H1 (cell line): ENCODE measurements at regions of chr1 and their contacts with region 1.

Region 1: GRCh38 chr1:167687919-167688519 is 33.8 kb upstream of the MPZL1 start:
- DNase-seq: peak; percentile 63 to 95
- H3K4me3 ChIP-seq: no peak overlapping the region
- H3K27ac ChIP-seq: no peak overlapping the region
- H3K4me1 ChIP-seq: peaks cover 2 to 12% (median 6%) of the 10 kb centered on the region in 4 experiments
- H3K27me3 ChIP-seq: no peaks in the 10 kb centered on the region; a peak in 1 of 7 replicates
- CTCF ChIP-seq: peak; percentile 31 to 88 (median 82)
- EP300 ChIP-seq: no peak
- POLR2A ChIP-seq: no peak
- RAD21 ChIP-seq: peak; percentile 90 to 95

Region 2: GRCh38 chr1:167542109-167543032 is 145.6 kb before region 1 on chr1:
- CTCF ChIA-PET with region 1: interaction called, 20 read pairs
- POLR2A ChIA-PET with region 1: no interaction called
- DNase-seq: no peak
- H3K4me3 ChIP-seq: no peak overlapping the region
- H3K27ac ChIP-seq: no peak overlapping the region
- H3K4me1 ChIP-seq: peaks cover 0 to 4% (median 3%) of the 10 kb centered on the region in 4 experiments; a peak in 2 of 7 replicates
- H3K27me3 ChIP-seq: no peaks in the 10 kb centered on the region; a peak in 1 of 7 replicates
- CTCF ChIP-seq: no peak
- EP300 ChIP-seq: no peak
- POLR2A ChIP-seq: no peak
- RAD21 ChIP-seq: no peak

Region 3: GRCh38 chr1:167563579-167564246 is 124.3 kb before region 1 on chr1:
- CTCF ChIA-PET with region 1: interaction called, 26 read pairs
- POLR2A ChIA-PET with region 1: no interaction called
- DNase-seq: no peak
- H3K4me3 ChIP-seq: no peak overlapping the region
- H3K27ac ChIP-seq: no peak overlapping the region
- H3K4me1 ChIP-seq: no peaks in the 10 kb centered on the region
- H3K27me3 ChIP-seq: no peaks in the 10 kb centered on the region
- CTCF ChIP-seq: no peak
- EP300 ChIP-seq: no peak
- POLR2A ChIP-seq: no peak
- RAD21 ChIP-seq: no peak

Region 4: GRCh38 chr1:167599957-167600581 is 88.0 kb before region 1 on chr1:
- CTCF ChIA-PET with region 1: interaction called, 33 read pairs
- POLR2A ChIA-PET with region 1: no interaction called
- DNase-seq: no peak
- H3K4me3 ChIP-seq: no peak overlapping the region
- H3K27ac ChIP-seq: no peak overlapping the region
- H3K4me1 ChIP-seq: peaks cover 0 to 5% (median 0%) of the 10 kb centered on the region in 4 experiments; a peak in 1 of 7 replicates
- H3K27me3 ChIP-seq: no peaks in the 10 kb centered on the region
- CTCF ChIP-seq: peak in 1 of 3 experiments; percentile 31; a peak in 1 of 4 replicates
- EP300 ChIP-seq: no peak
- POLR2A ChIP-seq: no peak
- RAD21 ChIP-seq: peak; percentile 44 to 51; a peak in 3 of 4 replicates

Region 5: GRCh38 chr1:167623951-167624350 is 64.1 kb before region 1 on chr1:
- CTCF ChIA-PET with region 1: interaction called, 13 read pairs
- POLR2A ChIA-PET with region 1: no interaction called
- DNase-seq: no peak
- H3K4me3 ChIP-seq: no peak overlapping the region
- H3K27ac ChIP-seq: no peak overlapping the region
- H3K4me1 ChIP-seq: peaks cover 0 to 2% (median 0%) of the 10 kb centered on the region in 4 experiments; a peak in 1 of 7 replicates
- H3K27me3 ChIP-seq: peaks cover 3 to 11% (median 8%) of the 10 kb centered on the region in 4 experiments
- CTCF ChIP-seq: no peak
- EP300 ChIP-seq: no peak
- POLR2A ChIP-seq: no peak
- RAD21 ChIP-seq: no peak

Region 6: GRCh38 chr1:167669209-167670124 is 18.6 kb before region 1 on chr1:
- CTCF ChIA-PET with region 1: interaction called, 30 read pairs
- POLR2A ChIA-PET with region 1: no interaction called
- DNase-seq: no peak
- H3K4me3 ChIP-seq: no peak overlapping the region
- H3K27ac ChIP-seq: no peak overlapping the region
- H3K4me1 ChIP-seq: peaks cover 0 to 4% (median 0%) of the 10 kb centered on the region in 4 experiments; a peak in 1 of 7 replicates
- H3K27me3 ChIP-seq: no peaks in the 10 kb centered on the region
- CTCF ChIP-seq: peak in 1 of 3 experiments; percentile 2; a peak in 1 of 4 replicates
- EP300 ChIP-seq: no peak
- POLR2A ChIP-seq: no peak
- RAD21 ChIP-seq: no peak

Region 7: DNA sequence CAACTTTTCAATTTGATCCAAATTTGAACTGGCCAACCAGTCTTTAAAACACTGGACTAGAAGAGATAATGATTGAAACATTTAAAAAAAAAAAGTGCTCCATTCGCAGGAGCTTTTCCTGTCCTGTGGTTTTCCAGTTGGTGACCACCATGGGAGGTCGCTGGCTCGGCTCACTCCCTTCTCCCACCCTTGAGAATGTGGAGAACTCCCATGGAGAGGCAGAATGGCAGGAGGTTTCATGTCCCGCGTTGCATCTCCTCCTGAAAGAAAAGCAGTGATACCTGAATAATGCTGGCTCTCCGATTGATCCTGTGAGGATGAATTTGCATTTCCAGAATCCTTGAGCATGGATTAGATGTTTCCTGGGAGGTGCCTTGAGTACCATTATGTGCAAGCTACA is 17.2 kb after region 1 on chr1:
- CTCF ChIA-PET with region 1: interaction called, 15 read pairs
- POLR2A ChIA-PET with region 1: no interaction called
- DNase-seq: no peak
- H3K4me3 ChIP-seq: peak overlapping the region in 1 of 4 experiments; percentile 20; a peak in 2 of 8 replicates
- H3K27ac ChIP-seq: no peak overlapping the region
- H3K4me1 ChIP-seq: peaks cover 2 to 19% (median 12%) of the 10 kb centered on the region in 4 experiments; a peak in 4 of 7 replicates
- H3K27me3 ChIP-seq: no peaks in the 10 kb centered on the region; a peak in 1 of 7 replicates
- CTCF ChIP-seq: no peak
- EP300 ChIP-seq: no peak
- POLR2A ChIP-seq: no peak
- RAD21 ChIP-seq: no peak